ENCODE measurements at regions of chr10 and their contacts with region 1.

Region 1: DNA sequence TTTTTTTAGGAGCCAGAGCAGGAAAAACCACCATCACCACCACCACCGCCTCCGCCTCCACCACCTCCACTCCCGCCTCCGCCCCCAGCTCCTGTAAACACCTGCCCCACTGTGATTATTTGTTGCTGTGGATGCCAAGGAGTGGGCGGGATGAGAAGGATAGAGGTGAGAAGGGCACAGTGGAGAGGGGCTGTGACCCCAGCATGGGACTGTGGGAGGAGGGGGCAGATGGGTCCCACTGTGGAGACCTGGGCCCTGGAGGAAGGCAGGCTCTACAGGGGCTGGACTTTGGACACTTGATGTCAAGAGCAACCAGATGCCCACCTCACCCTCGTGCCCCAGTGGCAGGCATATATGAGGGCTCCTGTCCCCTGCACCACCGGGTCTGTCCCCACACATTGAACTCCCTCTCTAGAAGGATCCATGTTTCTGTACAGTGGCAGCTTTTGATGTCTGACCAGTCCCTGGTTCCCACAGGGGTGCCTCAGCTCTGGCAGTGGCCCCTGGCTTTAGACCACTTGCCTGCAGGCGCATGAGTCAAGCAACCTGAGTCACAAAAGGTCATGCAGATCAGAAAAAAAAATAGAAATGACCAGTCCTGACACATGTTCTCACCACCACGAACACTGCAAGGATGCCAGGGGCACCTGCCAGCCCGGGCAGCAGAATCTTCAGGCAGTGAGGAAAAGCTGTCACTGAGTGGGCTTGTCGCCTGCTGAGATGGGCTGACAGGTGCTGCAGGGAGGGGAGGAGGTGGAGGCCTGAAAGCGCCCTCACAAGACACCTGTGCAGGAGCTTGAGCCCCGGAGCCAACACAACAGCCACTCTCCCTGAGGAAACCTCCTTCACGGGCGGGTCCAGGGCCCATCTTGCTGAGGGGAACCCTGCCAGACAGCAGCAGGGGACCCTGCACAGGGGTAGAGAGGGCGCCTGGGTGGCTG is 25.0 kb downstream of the ANTXRL start:
- DNase-seq: no peak
- H3K4me3 ChIP-seq: no peak overlapping the region
- H3K4me1 ChIP-seq: no peaks in the 10 kb centered on the region
- H3K27me3 ChIP-seq: no peaks in the 10 kb centered on the region

Region 2: DNA sequence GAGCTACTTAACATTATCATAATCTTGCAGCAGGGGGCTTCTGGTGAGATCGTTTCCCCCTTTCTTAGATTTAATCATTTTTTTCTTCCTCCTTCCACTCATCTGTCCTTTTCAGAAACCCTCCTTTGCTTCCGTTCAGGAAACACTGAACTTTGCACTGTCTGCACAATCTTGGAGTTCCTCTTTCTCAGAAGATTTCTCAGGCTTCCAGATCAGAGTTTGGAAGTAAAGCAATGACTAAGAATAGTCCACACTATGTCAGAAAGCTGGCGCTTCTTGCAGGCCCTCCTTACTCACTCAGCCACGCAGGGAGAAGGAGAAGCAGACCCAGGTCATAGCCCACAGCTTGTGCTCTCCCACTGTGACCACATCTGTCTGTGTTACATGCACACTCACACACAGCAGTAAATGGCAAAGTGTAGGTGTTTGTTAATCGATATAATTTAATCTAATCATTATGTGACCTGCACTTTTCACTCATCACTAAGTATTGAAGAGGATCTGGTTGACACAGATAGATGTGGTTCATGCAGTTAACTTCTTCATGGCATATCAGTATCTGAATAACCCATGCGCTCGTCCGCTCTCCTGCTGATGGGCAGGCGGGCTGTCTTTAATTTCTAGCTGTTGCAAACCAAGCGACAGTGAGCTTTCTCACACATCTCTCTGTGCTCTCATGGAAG is 907.5 kb before region 1 on chr10:
- in situ Hi-C with region 1: no loop called
- DNase-seq: no peak
- H3K4me3 ChIP-seq: no peak overlapping the region
- H3K4me1 ChIP-seq: no peaks in the 10 kb centered on the region
- H3K27me3 ChIP-seq: no peaks in the 10 kb centered on the region

Region 3: GRCh38 chr10:46092524-46093081 is 219.2 kb before region 1 on chr10:
- in situ Hi-C with region 1: no loop called
- DNase-seq: no peak
- H3K4me3 ChIP-seq: no peak overlapping the region
- H3K4me1 ChIP-seq: peaks cover 11% of the 10 kb centered on the region
- H3K27me3 ChIP-seq: no peaks in the 10 kb centered on the region

Region 4: GRCh38 chr10:46251857-46252847 is 59.6 kb before region 1 on chr10:
- in situ Hi-C with region 1: loop called (anchors 5 kb)
- DNase-seq: no peak
- H3K4me3 ChIP-seq: no peak overlapping the region
- H3K4me1 ChIP-seq: no peaks in the 10 kb centered on the region
- H3K27me3 ChIP-seq: no peaks in the 10 kb centered on the region